ENCODE measurements at regions of chr13 and their contacts with region 1.

Region 1: DNA sequence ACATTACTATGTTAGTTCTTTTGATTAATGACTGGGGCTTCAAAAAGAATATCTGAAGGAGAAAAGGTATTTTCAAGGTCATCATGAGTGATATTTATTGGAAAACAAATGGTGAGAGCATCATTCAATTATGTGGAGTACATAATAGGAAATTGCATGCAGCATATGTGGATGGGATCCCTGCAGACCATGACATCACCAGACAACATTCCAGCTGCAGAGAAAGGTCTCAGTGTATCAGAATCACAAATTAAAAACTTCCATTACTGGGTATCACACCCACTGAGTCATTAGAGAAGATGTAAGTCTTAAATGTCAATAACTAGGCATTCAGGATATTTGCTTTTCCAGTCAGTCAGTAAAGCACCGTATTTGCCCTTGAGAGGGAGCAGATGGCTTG is 574.4 kb upstream of the SLC10A2 start:
- DNase-seq: no peak
- ATAC-seq: no peak
- H3K4me3 ChIP-seq: no peak overlapping the region
- H3K27ac ChIP-seq: no peak overlapping the region
- H3K4me1 ChIP-seq: no peaks in the 10 kb centered on the region
- H3K27me3 ChIP-seq: no peaks in the 10 kb centered on the region
- CTCF ChIP-seq: no peak
- POLR2A ChIP-seq: no peak
- RAD21 ChIP-seq: no peak

Region 2: DNA sequence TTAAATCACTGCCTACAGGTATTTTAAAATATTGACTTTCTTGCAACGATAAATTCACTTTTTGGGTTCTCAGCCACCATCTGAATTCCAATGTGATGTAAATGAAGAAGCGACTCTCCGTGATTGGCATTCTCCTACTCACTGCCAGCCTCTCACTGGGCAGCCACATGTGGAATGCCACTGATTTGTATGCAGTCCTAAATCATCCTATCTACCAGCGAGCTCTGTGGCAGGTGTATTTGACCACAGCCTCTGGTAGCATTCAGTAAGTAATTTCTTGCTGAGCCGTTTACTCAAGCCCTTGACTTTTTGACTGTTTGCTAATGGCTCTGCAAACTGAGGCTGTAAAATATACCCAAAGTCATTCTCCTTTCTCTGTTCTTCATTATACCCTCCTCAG is 15.4 kb before region 1 on chr13:
- CTCF ChIA-PET with region 1: no interaction called
- POLR2A ChIA-PET with region 1: no interaction called
- RAD21 ChIA-PET with region 1: no interaction called
- intact Hi-C with region 1: loop called (anchors 1 kb)
- DNase-seq: no peak
- ATAC-seq: no peak
- H3K4me3 ChIP-seq: no peak overlapping the region
- H3K27ac ChIP-seq: no peak overlapping the region
- H3K4me1 ChIP-seq: no peaks in the 10 kb centered on the region
- H3K27me3 ChIP-seq: no peaks in the 10 kb centered on the region
- CTCF ChIP-seq: no peak
- POLR2A ChIP-seq: no peak
- RAD21 ChIP-seq: no peak

Measured in HCT116 (cell line).